PC-9 (cell line): ENCODE measurements at regions of chr14 and their contacts with region 1.

Region 1: DNA sequence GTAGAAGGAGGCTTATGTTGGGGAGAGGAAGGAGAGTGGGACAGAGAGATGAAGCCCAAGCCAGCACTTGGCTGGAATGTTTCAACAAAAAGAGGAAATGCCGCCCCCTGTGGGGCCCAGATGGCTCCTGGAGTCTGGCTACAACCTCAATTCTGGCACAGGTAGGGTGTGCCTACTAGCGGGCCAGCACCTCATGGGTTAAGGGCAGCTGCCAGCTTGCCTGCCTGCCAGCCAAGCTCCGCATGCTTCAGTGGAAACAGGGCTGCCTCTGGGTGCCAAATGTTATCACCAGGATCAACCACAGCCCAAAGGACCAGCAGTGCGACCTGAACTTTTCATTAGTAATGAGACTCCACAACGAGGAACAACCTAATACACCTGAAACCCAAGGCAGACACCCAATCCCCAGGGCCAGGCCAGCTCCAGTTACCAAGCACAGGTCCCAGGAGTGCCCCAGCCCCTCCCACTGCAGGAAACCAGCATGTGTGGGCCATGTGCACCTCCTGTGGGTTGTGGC is 11.3 kb downstream of the RAB15 start:
- DNase-seq: peak; percentile 85 to 92
- H3K4me3 ChIP-seq: no peak overlapping the region
- H3K27ac ChIP-seq: peak overlapping the region; percentile 44
- H3K4me1 ChIP-seq: peaks cover 53% of the 10 kb centered on the region
- H3K27me3 ChIP-seq: no peaks in the 10 kb centered on the region
- CTCF ChIP-seq: peak; percentile 51; the same call in 1 of the 2 replicates

Region 2: GRCh38 chr14:64324895-64325294 is 635.9 kb before region 1 on chr14:
- CTCF ChIA-PET with region 1: no interaction called
- POLR2A ChIA-PET with region 1: no interaction called
- intact Hi-C with region 1: no loop called
- DNase-seq: peak in 1 of 2 experiments; percentile 47
- H3K4me3 ChIP-seq: no peak overlapping the region
- H3K27ac ChIP-seq: peak overlapping the region; percentile 53
- H3K4me1 ChIP-seq: peaks cover 18% of the 10 kb centered on the region
- H3K27me3 ChIP-seq: no peaks in the 10 kb centered on the region
- CTCF ChIP-seq: no peak

Region 3: GRCh38 chr14:64971943-64972791 is 11.3 kb after region 1 on chr14 and contains the start of gene RAB15:
- CTCF ChIA-PET with region 1: interaction called, 5 read pairs
- POLR2A ChIA-PET with region 1: no interaction called
- intact Hi-C with region 1: loop called (anchors 1 kb)
- DNase-seq: peak in 1 of 2 experiments; percentile 42
- H3K4me3 ChIP-seq: peak within 1 kb of the TSS; percentile 83
- H3K27ac ChIP-seq: peak within 1 kb of the TSS; percentile 79
- H3K4me1 ChIP-seq: peaks cover 45% of the 10 kb centered on the region
- H3K27me3 ChIP-seq: no peaks in the 10 kb centered on the region
- CTCF ChIP-seq: no peak
- total RNA-seq, gene RAB15: 52.9 and 74.9 TPM in 2 replicates

Region 4: GRCh38 chr14:65102441-65103149 is 141.8 kb after region 1 on chr14 and contains the start of gene MAX:
- CTCF ChIA-PET with region 1: no interaction called
- POLR2A ChIA-PET with region 1: interaction called, 11 read pairs
- intact Hi-C with region 1: no loop called
- DNase-seq: peak; percentile 96 to 99
- H3K4me3 ChIP-seq: peak within 1 kb of the TSS; percentile 88
- H3K27ac ChIP-seq: peak within 1 kb of the TSS; percentile 46
- H3K4me1 ChIP-seq: peaks cover 14% of the 10 kb centered on the region
- H3K27me3 ChIP-seq: no peaks in the 10 kb centered on the region
- CTCF ChIP-seq: no peak
- total RNA-seq, gene MAX: 76.1 and 84.1 TPM in 2 replicates

Region 5: DNA sequence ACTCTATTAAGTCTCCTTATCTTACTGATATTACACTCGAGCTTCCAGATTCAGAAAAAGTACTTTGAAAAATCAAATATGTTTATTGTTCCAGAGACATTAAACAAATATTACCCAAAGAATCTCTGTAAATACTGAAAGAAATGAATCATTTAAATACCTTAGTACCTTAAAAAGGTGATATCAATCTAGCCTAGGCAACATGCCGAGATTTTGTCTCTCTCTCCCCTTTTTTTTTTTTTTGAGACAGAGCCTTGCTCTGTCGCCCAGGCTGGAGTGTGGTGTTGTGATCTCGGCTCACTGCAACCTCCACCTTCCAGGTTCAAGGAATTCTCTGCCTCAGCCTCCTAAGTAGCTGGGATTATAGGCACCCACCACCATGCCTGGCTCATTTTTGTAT is 596.3 kb after region 1 on chr14:
- CTCF ChIA-PET with region 1: no interaction called
- POLR2A ChIA-PET with region 1: interaction called, 10 read pairs
- intact Hi-C with region 1: no loop called
- DNase-seq: no peak
- H3K4me3 ChIP-seq: no peak overlapping the region
- H3K27ac ChIP-seq: no peak overlapping the region; the same call in 1 of the 2 replicates
- H3K4me1 ChIP-seq: no peaks in the 10 kb centered on the region
- H3K27me3 ChIP-seq: no peaks in the 10 kb centered on the region
- CTCF ChIP-seq: no peak